Esophagus squamous epithelium (tissue), 5 donors: ENCODE measurements at regions of chr6 and their contacts with region 1.

Region 1: GRCh38 chr6:57021086-57021720 is 25.3 kb upstream of the KIAA1586 start:
- DNase-seq: no peak
- H3K4me3 ChIP-seq: no peak overlapping the region
- H3K27ac ChIP-seq: no peak overlapping the region
- H3K4me1 ChIP-seq: no peaks in the 10 kb centered on the region
- H3K27me3 ChIP-seq: no peaks in the 10 kb centered on the region
- CTCF ChIP-seq: peak in 5 of 6 experiments; percentile 39 to 64 (median 46)
- POLR2A ChIP-seq: no peak

Region 2: DNA sequence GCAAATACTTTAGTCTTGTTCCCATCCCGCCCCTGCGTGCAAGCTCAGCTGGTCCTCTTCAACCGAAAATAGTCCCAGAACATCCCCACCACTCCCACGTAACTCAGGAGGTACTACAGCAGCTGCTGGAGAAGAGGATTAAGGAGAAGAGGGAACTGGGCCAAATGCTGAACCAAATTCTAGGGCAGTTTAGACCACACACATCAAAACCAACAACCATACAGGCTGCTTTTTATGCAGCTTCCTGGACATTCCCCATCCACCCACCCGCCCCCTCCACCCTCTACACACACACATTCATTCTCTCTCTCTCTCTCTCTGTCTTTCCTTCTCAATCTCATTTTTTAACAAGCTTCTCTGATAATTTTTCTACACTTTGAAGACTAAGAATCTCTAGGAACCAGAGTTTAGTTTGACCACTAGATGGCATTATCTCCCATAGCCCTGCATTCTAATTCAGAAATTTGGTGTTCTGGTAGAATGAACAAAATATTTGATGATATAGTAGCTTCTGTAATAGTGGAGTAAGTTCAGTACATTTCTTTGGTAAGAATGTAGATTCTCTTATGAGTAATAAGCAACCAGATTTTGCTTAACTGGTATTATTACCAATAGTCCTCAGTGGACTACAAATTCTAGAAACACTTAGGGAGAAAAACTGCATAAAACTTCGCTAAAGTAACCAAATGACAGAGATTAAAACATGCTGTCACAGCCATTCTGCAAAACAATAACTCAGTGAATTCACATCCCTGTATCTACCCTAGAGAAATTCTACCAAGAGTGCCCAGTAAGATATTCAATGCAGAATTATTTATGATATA is 118.3 kb before region 1 on chr6:
- intact Hi-C with region 1: loop called (anchors 10 kb)
- DNase-seq: no peak
- H3K4me3 ChIP-seq: peak overlapping the region in 1 of 4 donors; percentile 37
- H3K27ac ChIP-seq: peak overlapping the region in 1 of 4 donors; percentile 28
- H3K4me1 ChIP-seq: peaks cover 0 to 20% (median 7%) of the 10 kb centered on the region in 3 donors
- H3K27me3 ChIP-seq: peaks cover 0 to 24% (median 0%) of the 10 kb centered on the region in 4 donors
- CTCF ChIP-seq: peak in 5 of 6 experiments; percentile 32 to 81 (median 55)
- POLR2A ChIP-seq: no peak

Region 3: GRCh38 chr6:56914798-56915658 is 106.2 kb before region 1 on chr6:
- intact Hi-C with region 1: no loop called
- DNase-seq: no peak
- H3K4me3 ChIP-seq: no peak overlapping the region
- H3K27ac ChIP-seq: no peak overlapping the region
- H3K4me1 ChIP-seq: no peaks in the 10 kb centered on the region
- H3K27me3 ChIP-seq: peaks cover 0 to 10% (median 0%) of the 10 kb centered on the region in 4 donors
- CTCF ChIP-seq: no peak
- POLR2A ChIP-seq: no peak

Region 4: GRCh38 chr6:56955171-56956045 is 65.8 kb before region 1 on chr6:
- intact Hi-C with region 1: no loop called
- DNase-seq: no peak
- H3K4me3 ChIP-seq: peak overlapping the region; percentile 44 to 85 (median 60)
- H3K27ac ChIP-seq: peak overlapping the region; percentile 45 to 83 (median 61)
- H3K4me1 ChIP-seq: peaks cover 4 to 36% (median 16%) of the 10 kb centered on the region in 3 donors
- H3K27me3 ChIP-seq: peaks cover 0 to 69% (median 0%) of the 10 kb centered on the region in 4 donors
- CTCF ChIP-seq: peak in 5 of 6 experiments; percentile 51 to 82 (median 67)
- POLR2A ChIP-seq: no peak

Region 5: DNA sequence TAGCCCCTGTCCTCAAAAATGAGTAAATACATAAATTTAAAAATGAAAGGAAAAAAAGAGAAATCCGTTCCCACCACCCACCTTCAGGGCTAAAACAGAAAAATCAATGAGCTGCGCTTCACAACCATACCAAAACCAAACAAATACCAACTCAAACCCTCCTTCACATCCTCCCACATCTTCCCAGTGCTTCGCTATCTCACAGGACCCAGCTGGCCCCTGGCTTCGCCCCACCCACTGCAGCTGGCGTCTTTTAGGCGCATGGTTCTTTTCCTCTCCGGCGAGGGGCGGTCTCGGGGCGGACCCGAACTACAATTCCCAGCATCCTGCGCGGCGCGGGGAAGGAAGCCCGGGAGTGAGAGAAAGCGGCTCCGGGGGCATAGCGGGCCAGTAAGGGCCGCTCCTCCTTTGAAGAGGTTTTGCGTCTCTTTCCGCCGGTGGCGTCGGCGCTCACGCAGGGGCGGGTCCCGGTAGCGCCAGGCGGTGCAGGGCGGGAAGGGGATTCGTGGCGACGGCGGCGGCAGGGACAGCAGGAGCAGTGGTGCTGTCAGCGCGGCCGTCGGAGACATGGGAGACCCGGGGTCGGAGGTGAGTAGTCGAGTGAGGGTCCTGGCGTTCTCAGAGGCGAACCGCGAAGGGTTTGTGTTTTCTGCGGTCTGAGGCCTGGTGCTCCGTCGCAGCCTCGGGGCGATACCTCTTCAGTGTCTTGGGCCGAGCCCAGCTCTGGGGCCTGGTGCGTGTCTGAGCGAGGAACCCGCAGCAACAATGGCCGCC is 68.7 kb after region 1 on chr6 and contains the start of gene ZNF451:
- intact Hi-C with region 1: no loop called
- DNase-seq: peak; percentile 90
- H3K4me3 ChIP-seq: peak within 1 kb of the TSS; percentile 45 to 68 (median 60)
- H3K27ac ChIP-seq: peak within 1 kb of the TSS; percentile 84 to 90 (median 87)
- H3K4me1 ChIP-seq: peaks cover 0 to 42% (median 10%) of the 10 kb centered on the region in 3 donors
- H3K27me3 ChIP-seq: no peaks in the 10 kb centered on the region
- CTCF ChIP-seq: peak in 1 of 6 experiments; percentile 36
- POLR2A ChIP-seq: peak in 3 of 4 donors; percentile 87 to 92 (median 87)
- total RNA-seq, gene ZNF451: 21.5 to 52.5 (median 29.5) TPM

Region 6: DNA sequence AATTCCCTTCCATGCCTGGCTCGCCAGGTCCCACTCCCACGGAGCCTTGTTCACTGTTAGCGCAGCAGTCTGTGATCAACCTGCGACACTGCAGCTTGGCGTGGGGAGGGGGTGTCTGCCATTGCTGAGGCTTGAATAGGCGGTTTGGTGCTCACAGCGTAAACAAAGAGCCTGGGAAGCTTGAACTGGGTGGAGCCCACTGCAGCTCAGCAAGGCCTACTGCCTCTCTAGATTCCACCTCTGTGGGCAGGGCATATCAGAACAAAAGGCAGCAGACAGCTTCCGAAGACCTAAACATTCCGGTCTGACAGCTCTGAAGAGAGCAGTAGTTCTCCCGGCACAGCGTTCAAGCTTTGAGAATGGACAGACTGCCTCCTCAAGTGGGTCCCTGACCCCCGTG is 266.9 kb after region 1 on chr6:
- intact Hi-C with region 1: no loop called
- DNase-seq: no peak
- H3K4me3 ChIP-seq: peak overlapping the region in 3 of 4 donors; percentile 18 to 31 (median 28)
- H3K27ac ChIP-seq: peak overlapping the region; percentile 44 to 76 (median 67)
- H3K4me1 ChIP-seq: peaks cover 3 to 28% (median 7%) of the 10 kb centered on the region in 3 donors
- H3K27me3 ChIP-seq: no peaks in the 10 kb centered on the region
- CTCF ChIP-seq: no peak
- POLR2A ChIP-seq: no peak